Breast epithelium (tissue), 4 donors: ENCODE measurements at regions of chr11 and their contacts with region 1.

Region 1: GRCh38 chr11:119210050-119210449 is 3.9 kb downstream of the CBL start:
- DNase-seq: no peak
- H3K4me3 ChIP-seq: no peak overlapping the region
- H3K27ac ChIP-seq: no peak overlapping the region
- H3K4me1 ChIP-seq: no peaks in the 10 kb centered on the region
- H3K27me3 ChIP-seq: no peaks in the 10 kb centered on the region
- CTCF ChIP-seq: no peak
- POLR2A ChIP-seq: no peak

Region 2: GRCh38 chr11:118443590-118444218 is 766.3 kb before region 1 on chr11:
- intact Hi-C with region 1: loop called (anchors 5 kb)
- DNase-seq: no peak
- H3K4me3 ChIP-seq: no peak overlapping the region
- H3K27ac ChIP-seq: peak overlapping the region in 1 of 2 donors; percentile 6
- H3K4me1 ChIP-seq: peaks cover 0 to 13% of the 10 kb centered on the region in 2 donors
- H3K27me3 ChIP-seq: no peaks in the 10 kb centered on the region
- CTCF ChIP-seq: no peak
- POLR2A ChIP-seq: no peak